Left ventricle myocardium inferior (tissue), 1 donor: ENCODE measurements at regions of chr18 and their contacts with region 1.

Region 1: DNA sequence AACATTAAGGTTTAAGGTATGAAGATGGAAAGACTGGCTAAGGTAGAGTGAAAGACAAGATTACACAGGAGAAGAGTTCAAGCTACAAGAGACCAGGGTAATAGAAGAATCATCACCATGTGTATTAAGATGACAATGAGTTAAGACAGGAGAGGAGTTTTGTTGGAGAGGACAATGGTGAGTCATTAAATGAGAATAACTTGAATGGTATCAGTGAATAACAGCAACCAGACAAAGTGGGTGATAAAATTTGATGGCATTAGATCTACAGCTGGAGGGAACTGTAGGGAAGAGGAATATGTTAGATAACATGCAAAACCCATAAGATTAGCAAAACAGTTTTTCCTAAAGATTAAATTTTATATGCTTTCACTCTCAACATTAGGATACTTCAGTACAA is 18.8 kb upstream of the ENOSF1 start:
- DNase-seq: no peak
- H3K4me3 ChIP-seq: no peak overlapping the region
- H3K27ac ChIP-seq: no peak overlapping the region
- H3K4me1 ChIP-seq: no peaks in the 10 kb centered on the region
- H3K27me3 ChIP-seq: no peaks in the 10 kb centered on the region
- CTCF ChIP-seq: no peak

Region 2: GRCh38 chr18:623761-624620 is 107.2 kb before region 1 on chr18:
- intact Hi-C with region 1: loop called (anchors 10 kb)
- DNase-seq: peak; percentile 30
- H3K4me3 ChIP-seq: no peak overlapping the region
- H3K27ac ChIP-seq: no peak overlapping the region
- H3K4me1 ChIP-seq: no peaks in the 10 kb centered on the region
- H3K27me3 ChIP-seq: peaks cover 11% of the 10 kb centered on the region
- CTCF ChIP-seq: peak; percentile 79